Heart right ventricle (tissue), 16 donors: ENCODE measurements at regions of chr9 and their contacts with region 1.

Region 1: DNA sequence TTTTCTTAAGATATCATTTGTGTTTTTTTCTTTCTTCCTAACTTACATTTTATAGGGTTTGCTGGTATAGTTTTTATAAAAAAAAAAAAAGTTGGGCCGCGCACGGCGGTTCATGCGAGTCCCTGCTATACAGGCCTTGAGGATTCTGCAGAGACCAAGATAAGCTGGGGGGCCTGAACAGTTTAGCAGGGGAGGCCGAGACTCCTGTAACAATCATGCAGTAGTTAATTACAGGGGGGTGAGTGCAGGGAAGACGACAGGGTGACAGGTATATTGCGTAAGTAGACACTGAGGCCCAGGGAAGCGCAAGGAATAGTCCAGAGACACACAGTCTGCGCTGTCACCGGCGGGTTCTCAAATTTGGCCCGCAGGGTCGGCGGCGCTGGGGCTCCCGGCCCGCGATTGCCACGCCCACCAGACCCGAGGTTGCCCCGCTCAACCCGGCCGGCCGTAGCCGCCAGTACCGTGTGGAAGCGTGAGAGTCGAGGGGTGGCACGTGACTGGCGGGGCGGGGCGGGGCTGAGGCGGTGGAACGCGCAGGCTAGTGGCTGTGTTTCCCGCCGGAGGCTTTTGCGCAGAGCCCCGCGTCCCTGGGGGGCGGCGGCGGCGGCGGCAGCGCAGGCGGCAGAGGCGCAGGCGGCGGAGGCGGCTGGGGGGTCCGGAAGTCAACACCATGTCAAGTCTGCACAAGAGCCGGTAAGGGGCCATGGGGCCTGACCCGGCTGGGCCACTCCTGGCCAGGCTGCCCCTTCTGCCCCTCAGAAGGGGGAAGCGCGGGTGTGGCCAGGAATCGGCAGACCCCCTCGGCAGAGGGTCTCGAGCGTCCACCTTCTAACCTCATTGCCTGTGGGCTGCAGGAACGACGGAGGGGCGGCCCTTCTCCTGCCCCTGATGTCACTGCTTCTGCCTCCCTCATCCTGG is at the start of gene TBC1D13:
- DNase-seq: peak; percentile 90 to 91
- ATAC-seq: peak; percentile 96 to 98 (median 97)
- H3K4me3 ChIP-seq: peak within 1 kb of the TSS; percentile 85 to 100 (median 96)
- H3K27ac ChIP-seq: peak within 1 kb of the TSS; percentile 71 to 95 (median 89)
- H3K4me1 ChIP-seq: peaks cover 8 to 30% (median 19%) of the 10 kb centered on the region in 9 donors
- H3K27me3 ChIP-seq: no peaks in the 10 kb centered on the region
- CTCF ChIP-seq: no peak
- total RNA-seq, gene TBC1D13: 15.0 to 21.3 (median 17.8) TPM

Region 2: GRCh38 chr9:128818099-128818838 is 31.3 kb after region 1 on chr9 and contains the start of gene ENDOG:
- intact Hi-C with region 1: loop called in 1 of 10 experiments (anchors 2 kb)
- DNase-seq: peak; percentile 97 to 99
- ATAC-seq: peak; percentile 92 to 98 (median 96)
- H3K4me3 ChIP-seq: peak within 1 kb of the TSS; percentile 60 to 83 (median 70)
- H3K27ac ChIP-seq: peak within 1 kb of the TSS; percentile 85 to 96 (median 92)
- H3K4me1 ChIP-seq: peaks cover 6 to 22% (median 16%) of the 10 kb centered on the region in 9 donors
- H3K27me3 ChIP-seq: no peaks in the 10 kb centered on the region
- CTCF ChIP-seq: peak; percentile 94 to 99 (median 99)
- total RNA-seq, gene ENDOG: 40.9 to 97.2 (median 52.0) TPM